AG04450 (cell line): ENCODE measurements at regions of chr19 and their contacts with region 1.

Region 1: GRCh38 chr19:37906869-37907734 is at the start of gene SIPA1L3:
- DNase-seq: peak; percentile 86
- H3K4me3 ChIP-seq: peak within 1 kb of the TSS; percentile 96
- H3K27ac ChIP-seq: peak within 1 kb of the TSS; percentile 65
- H3K27me3 ChIP-seq: no peaks in the 10 kb centered on the region
- CTCF ChIP-seq: no peak; the same call in 1 of the 2 replicates
- polyA plus RNA-seq, gene SIPA1L3: 4.9 and 9.4 TPM in 2 replicates

Region 2: DNA sequence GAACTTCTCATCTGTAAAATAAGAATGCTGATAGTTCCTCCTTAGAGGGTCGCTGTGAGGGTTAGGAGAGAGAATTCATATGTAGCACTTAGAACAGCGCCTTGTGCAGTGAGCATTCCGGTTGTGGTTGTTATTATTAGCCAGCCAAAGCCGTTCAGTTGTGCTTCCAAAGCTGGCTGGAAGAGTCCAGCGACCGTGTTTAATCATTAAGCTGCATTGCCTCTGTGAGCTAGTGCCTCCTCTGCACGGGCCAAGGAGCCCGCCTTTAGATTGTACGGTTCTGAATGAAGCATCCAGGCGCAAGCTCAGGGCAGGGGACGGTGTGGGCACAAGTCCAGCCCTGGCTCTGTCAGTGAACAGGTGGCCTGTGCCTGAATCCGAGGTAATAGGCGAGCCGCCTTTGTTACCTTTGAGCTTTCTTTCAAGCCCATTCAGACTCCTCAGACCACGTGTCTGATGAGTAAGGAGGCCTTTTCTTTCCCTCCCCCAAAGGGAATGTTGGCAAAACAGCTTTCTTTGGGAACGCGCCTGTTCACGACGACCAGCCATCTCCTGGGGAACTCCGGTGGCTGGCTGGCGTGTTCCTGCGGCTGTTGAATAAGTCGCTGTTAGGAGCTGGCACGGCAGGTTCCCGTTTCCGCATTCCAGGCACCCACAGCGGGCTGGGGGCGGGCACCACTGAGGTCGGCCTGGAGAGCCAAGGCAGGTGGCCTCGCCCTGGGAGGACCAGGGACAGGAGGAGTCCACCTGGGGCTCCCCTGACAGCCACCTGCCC is 25.0 kb after region 1 on chr19:
- CTCF ChIA-PET with region 1: interaction called, 16 read pairs
- POLR2A ChIA-PET with region 1: interaction called, 8 read pairs
- DNase-seq: peak; percentile 38
- H3K4me3 ChIP-seq: peak overlapping the region; percentile 45
- H3K27ac ChIP-seq: peak overlapping the region; percentile 89
- H3K27me3 ChIP-seq: no peaks in the 10 kb centered on the region
- CTCF ChIP-seq: peak; percentile 13; the same call in 1 of the 2 replicates

Region 3: DNA sequence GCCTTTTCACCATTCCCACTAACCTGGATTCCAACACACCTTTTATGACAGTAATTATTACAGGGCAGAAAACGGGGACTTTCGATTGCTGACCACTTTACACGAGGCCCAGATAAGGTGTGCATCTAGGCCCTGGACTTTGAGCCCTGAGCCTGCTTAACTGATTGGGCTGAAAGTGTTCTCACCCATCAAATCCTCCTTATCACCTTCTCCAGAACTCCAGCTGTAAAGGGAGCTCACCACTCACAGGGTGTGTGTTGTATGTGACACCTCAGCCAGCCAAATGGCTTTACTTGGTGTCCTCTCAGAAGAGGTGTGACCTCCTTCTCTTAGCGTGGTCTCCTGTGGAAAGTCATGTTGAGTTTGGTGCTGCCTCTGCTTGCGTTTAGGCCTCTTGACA is 36.4 kb after region 1 on chr19:
- CTCF ChIA-PET with region 1: no interaction called
- POLR2A ChIA-PET with region 1: no interaction called
- DNase-seq: no peak
- H3K4me3 ChIP-seq: no peak overlapping the region
- H3K27ac ChIP-seq: no peak overlapping the region
- H3K27me3 ChIP-seq: no peaks in the 10 kb centered on the region
- CTCF ChIP-seq: no peak

Region 4: DNA sequence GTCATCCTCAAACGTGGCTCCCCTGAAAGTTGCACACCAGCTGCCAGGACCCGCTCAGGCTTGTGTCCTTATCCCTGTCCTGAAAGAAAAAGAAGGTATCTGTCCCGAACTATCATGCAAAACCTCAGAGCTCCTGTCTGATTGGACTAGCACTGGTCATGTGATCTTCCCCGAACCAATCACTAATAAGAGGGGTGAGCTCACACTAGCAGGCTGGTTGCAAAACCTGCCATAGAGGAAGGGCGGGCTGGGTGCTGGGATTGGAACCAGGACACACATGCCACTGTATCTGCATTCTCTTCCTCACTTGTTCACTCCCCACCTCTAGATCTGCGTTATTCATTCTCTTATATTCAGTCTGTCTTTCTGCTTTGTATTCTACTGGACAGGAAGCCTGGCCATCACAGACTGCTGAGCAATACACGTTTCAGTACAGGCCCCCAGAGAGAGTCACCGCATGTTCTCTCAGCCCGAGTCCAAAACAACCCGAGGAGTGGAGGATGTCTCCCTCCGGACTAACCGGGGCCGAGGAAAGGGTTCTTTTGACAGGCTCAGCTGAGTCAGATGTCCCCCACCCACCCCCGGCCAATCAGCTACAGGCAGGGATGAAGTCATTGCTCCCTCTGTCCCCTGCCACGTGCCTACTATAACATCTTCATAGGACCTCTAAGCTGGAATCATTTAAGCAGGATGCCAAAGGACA is 97.6 kb after region 1 on chr19:
- CTCF ChIA-PET with region 1: interaction called, 14 read pairs
- POLR2A ChIA-PET with region 1: interaction called, 20 read pairs
- DNase-seq: peak; percentile 91
- H3K4me3 ChIP-seq: peak overlapping the region; percentile 51
- H3K27ac ChIP-seq: peak overlapping the region; percentile 99
- H3K27me3 ChIP-seq: no peaks in the 10 kb centered on the region
- CTCF ChIP-seq: no peak

Region 5: GRCh38 chr19:38095411-38096308 is 188.6 kb after region 1 on chr19:
- CTCF ChIA-PET with region 1: interaction called, 23 read pairs
- POLR2A ChIA-PET with region 1: no interaction called
- DNase-seq: no peak
- H3K4me3 ChIP-seq: no peak overlapping the region
- H3K27ac ChIP-seq: peak overlapping the region; percentile 21
- H3K27me3 ChIP-seq: no peaks in the 10 kb centered on the region
- CTCF ChIP-seq: peak; percentile 76

Region 6: GRCh38 chr19:38142176-38143035 is 235.3 kb after region 1 on chr19:
- CTCF ChIA-PET with region 1: interaction called, 31 read pairs
- POLR2A ChIA-PET with region 1: no interaction called
- DNase-seq: no peak
- H3K4me3 ChIP-seq: no peak overlapping the region
- H3K27ac ChIP-seq: peak overlapping the region; percentile 2
- H3K27me3 ChIP-seq: no peaks in the 10 kb centered on the region
- CTCF ChIP-seq: peak; percentile 87

Region 7: GRCh38 chr19:38224014-38224862 is 317.1 kb after region 1 on chr19 and contains the start of gene DPF1:
- CTCF ChIA-PET with region 1: interaction called, 10 read pairs
- POLR2A ChIA-PET with region 1: no interaction called
- DNase-seq: no peak
- H3K4me3 ChIP-seq: peak within 1 kb of the TSS; percentile 67
- H3K27ac ChIP-seq: no peak within 1 kb of the TSS
- H3K27me3 ChIP-seq: no peaks in the 10 kb centered on the region
- CTCF ChIP-seq: 0 out of 2 replicates have a peak, but pooled peaks have one; percentile 9
- polyA plus RNA-seq, gene DPF1: 1.4 and 1.6 TPM in 2 replicates